ENCODE measurements at regions of chr11 and their contacts with region 1.

Region 1: GRCh38 chr11:35288817-35289541 is 130.4 kb downstream of the SLC1A2 start:
- DNase-seq: no peak
- ATAC-seq: no peak
- H3K4me3 ChIP-seq: no peak overlapping the region
- H3K4me3 Mint-ChIP-seq: peak overlapping the region in 1 of 10 donors; percentile 30
- H3K27ac ChIP-seq: no peak overlapping the region
- H3K27ac Mint-ChIP-seq: no peak overlapping the region
- H3K4me1 ChIP-seq: peaks cover 0 to 9% of the 10 kb centered on the region in 2 donors
- H3K4me1 Mint-ChIP-seq: peaks cover 3 to 31% (median 14%) of the 10 kb centered on the region in 7 donors
- H3K27me3 ChIP-seq: no peaks in the 10 kb centered on the region
- H3K27me3 Mint-ChIP-seq: peaks cover 0 to 3% (median 0%) of the 10 kb centered on the region in 5 donors

Region 2: DNA sequence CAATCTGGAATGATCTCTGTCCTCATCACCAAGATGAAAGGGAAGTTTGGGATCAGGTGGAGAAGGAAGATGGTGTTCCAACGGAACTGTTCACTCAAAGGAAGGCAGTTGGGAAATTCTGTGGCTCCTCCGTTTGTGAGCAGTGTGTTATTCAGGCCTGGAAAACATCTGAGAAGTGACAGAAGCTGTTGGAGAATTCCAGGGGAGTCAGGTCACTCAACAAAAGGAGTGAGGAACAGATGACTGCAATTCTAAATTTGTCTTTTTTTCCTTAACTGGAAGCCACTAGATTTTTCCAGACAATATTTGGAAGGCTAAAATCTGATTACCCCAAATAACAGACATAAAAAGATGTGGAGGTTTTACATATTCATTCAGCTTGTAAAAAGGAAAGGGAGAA is 42.2 kb before region 1 on chr11:
- CTCF ChIA-PET with region 1: no interaction called
- POLR2A ChIA-PET with region 1: no interaction called
- intact Hi-C with region 1: loop called in 1 of 2 experiments (anchors 5 kb)
- DNase-seq: no peak
- ATAC-seq: no peak
- H3K4me3 ChIP-seq: no peak overlapping the region
- H3K4me3 Mint-ChIP-seq: peak overlapping the region in 5 of 10 donors; percentile 14 to 81 (median 70)
- H3K27ac ChIP-seq: peak overlapping the region; percentile 75
- H3K27ac Mint-ChIP-seq: peak overlapping the region; percentile 40 to 100 (median 99)
- H3K4me1 ChIP-seq: peaks cover 58 to 63% of the 10 kb centered on the region in 2 donors
- H3K4me1 Mint-ChIP-seq: peaks cover 24 to 92% (median 69%) of the 10 kb centered on the region in 7 donors
- H3K27me3 ChIP-seq: no peaks in the 10 kb centered on the region
- H3K27me3 Mint-ChIP-seq: peaks cover 0 to 4% (median 0%) of the 10 kb centered on the region in 5 donors

Measured in naive thymus-derived CD4-positive, alpha-beta T cell (primary cell).